ENCODE measurements at regions of chr2 and their contacts with region 1.

Region 1: GRCh38 chr2:197786010-197786877 is 1.1 kb upstream of the BOLL start:
- DNase-seq: peak; percentile 75
- ATAC-seq: peak; percentile 89
- H3K4me3 Mint-ChIP-seq: peak overlapping the region; percentile 68
- H3K27ac Mint-ChIP-seq: no peak overlapping the region
- H3K4me1 Mint-ChIP-seq: peaks cover 2% of the 10 kb centered on the region
- H3K27me3 Mint-ChIP-seq: peaks cover 21% of the 10 kb centered on the region
- CTCF ChIP-seq: peak; percentile 91

Region 2: GRCh38 chr2:197760293-197760657 is 26.0 kb before region 1 on chr2:
- CTCF ChIA-PET with region 1: no interaction called
- POLR2A ChIA-PET with region 1: no interaction called
- intact Hi-C with region 1: no loop called
- DNase-seq: no peak
- ATAC-seq: no peak
- H3K4me3 Mint-ChIP-seq: no peak overlapping the region
- H3K27ac Mint-ChIP-seq: no peak overlapping the region
- H3K4me1 Mint-ChIP-seq: no peaks in the 10 kb centered on the region
- H3K27me3 Mint-ChIP-seq: peaks cover 4% of the 10 kb centered on the region
- CTCF ChIP-seq: no peak

Region 3: DNA sequence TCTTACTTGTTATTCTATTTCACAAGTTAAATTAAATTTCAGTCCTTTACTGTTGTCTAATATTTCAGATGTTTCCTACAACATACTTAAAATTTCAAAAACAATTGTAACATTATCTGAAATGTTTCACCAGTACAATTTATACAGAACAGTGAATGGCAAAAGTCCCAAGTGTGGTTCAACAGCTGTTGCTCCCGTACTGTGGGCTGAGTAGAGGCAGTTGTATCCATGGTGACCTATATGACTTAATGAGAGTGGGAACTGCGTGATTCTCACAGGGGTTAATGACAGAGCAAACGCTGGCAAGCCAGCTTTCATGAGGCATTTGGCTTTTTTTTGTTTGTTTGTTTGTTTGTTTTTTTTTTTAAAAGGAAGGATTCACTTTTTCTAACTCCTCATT is 12.8 kb after region 1 on chr2:
- CTCF ChIA-PET with region 1: interaction called, 10 read pairs
- POLR2A ChIA-PET with region 1: no interaction called
- intact Hi-C with region 1: no loop called
- DNase-seq: no peak
- ATAC-seq: no peak
- H3K4me3 Mint-ChIP-seq: no peak overlapping the region
- H3K27ac Mint-ChIP-seq: no peak overlapping the region
- H3K4me1 Mint-ChIP-seq: peaks cover 13% of the 10 kb centered on the region
- H3K27me3 Mint-ChIP-seq: peaks cover 19% of the 10 kb centered on the region
- CTCF ChIP-seq: no peak